Mammary epithelial cell (primary cell): ENCODE measurements at regions of chr10 and their contacts with region 1.

Region 1: GRCh38 chr10:112314822-112315474 is 31.7 kb downstream of the TECTB start:
- DNase-seq: peak; percentile 41
- H3K4me3 ChIP-seq: no peak overlapping the region
- H3K27ac ChIP-seq: no peak overlapping the region
- H3K4me1 ChIP-seq: no peaks in the 10 kb centered on the region
- H3K27me3 ChIP-seq: no peaks in the 10 kb centered on the region
- CTCF ChIP-seq: peak; percentile 83 to 86

Region 2: DNA sequence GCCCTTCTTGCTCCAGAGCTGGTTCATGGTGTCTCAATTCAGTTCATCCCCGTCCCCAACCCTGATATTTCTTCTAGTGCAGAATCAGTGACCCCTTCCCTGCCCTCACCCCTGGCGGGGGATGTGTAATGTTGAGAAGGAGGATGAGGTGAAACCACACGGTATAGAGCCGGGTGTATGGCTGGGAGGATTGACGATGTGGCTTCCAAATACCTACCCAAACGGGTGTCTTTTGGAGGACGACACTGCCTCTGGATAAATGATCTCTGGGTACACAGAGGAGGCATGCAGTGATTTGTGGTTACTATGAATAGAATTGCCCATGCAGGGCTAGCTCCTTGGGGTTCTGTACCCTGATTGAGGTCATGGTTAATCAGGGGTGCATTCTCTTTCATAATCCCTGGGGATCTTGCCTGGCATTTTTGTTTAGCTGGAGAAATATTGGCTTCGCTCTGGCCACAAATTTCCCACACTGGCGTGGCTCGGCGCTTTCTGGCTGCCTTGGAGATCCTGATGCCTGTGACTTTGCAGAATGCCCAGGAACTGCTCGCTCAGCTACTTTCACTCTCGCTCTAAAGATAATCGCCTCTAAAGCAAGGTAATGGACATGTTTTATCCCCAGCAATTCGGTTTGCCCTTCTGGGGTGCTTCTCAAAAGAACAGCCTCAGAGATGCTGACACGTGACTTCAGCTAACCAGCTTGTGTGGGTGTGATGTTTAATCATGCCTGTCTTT is 1581.6 kb before region 1 on chr10:
- CTCF ChIA-PET with region 1: no interaction called
- dilution Hi-C with region 1: no loop called
- in situ Hi-C with region 1: no loop called
- intact Hi-C with region 1: loop called (anchors 10 kb)
- DNase-seq: peak; percentile 16
- H3K4me3 ChIP-seq: peak overlapping the region; percentile 15 to 46 (median 42)
- H3K27ac ChIP-seq: no peak overlapping the region
- H3K4me1 ChIP-seq: peaks cover 3% of the 10 kb centered on the region
- H3K27me3 ChIP-seq: peaks cover 2% of the 10 kb centered on the region
- CTCF ChIP-seq: no peak

Region 3: DNA sequence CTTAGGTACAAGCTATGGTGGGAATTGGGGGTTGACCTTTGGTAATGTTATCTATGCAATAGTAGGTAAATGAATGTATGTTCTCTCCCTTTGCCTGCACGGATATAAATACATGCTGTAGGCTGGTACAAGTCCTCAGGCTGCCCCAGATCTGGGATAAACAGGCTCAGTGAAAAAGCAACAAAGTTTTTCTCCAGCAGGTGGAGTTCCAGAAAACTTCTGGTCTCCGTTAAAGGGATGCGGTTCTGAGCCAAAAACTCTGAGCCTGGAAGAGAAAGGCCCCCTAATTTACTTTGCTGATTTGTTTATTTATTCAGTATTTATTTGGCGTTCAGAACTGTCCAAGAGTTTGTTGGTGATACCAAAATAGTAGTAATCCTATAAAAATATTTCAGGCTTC is 1033.4 kb before region 1 on chr10:
- CTCF ChIA-PET with region 1: no interaction called
- dilution Hi-C with region 1: no loop called
- in situ Hi-C with region 1: no loop called
- intact Hi-C with region 1: loop called (anchors 5 kb)
- DNase-seq: peak; percentile 1
- H3K4me3 ChIP-seq: no peak overlapping the region
- H3K27ac ChIP-seq: no peak overlapping the region
- H3K4me1 ChIP-seq: no peaks in the 10 kb centered on the region
- H3K27me3 ChIP-seq: no peaks in the 10 kb centered on the region
- CTCF ChIP-seq: peak in 1 of 2 donors; percentile 25

Region 4: GRCh38 chr10:112115799-112116385 is 199.1 kb before region 1 on chr10:
- CTCF ChIA-PET with region 1: no interaction called
- dilution Hi-C with region 1: no loop called
- in situ Hi-C with region 1: no loop called
- intact Hi-C with region 1: loop called (anchors 1 kb)
- DNase-seq: peak; percentile 7
- H3K4me3 ChIP-seq: no peak overlapping the region
- H3K27ac ChIP-seq: no peak overlapping the region
- H3K4me1 ChIP-seq: no peaks in the 10 kb centered on the region
- H3K27me3 ChIP-seq: no peaks in the 10 kb centered on the region
- CTCF ChIP-seq: peak; percentile 88

Region 5: GRCh38 chr10:112434988-112435619 is 120.2 kb after region 1 on chr10:
- CTCF ChIA-PET with region 1: no interaction called
- dilution Hi-C with region 1: no loop called
- in situ Hi-C with region 1: no loop called
- intact Hi-C with region 1: loop called (anchors 1 kb)
- DNase-seq: peak; percentile 3
- H3K4me3 ChIP-seq: no peak overlapping the region
- H3K27ac ChIP-seq: no peak overlapping the region
- H3K4me1 ChIP-seq: no peaks in the 10 kb centered on the region
- H3K27me3 ChIP-seq: no peaks in the 10 kb centered on the region
- CTCF ChIP-seq: peak; percentile 2 to 39

Region 6: GRCh38 chr10:112461029-112461887 is 146.3 kb after region 1 on chr10:
- CTCF ChIA-PET with region 1: no interaction called
- dilution Hi-C with region 1: no loop called
- in situ Hi-C with region 1: no loop called
- intact Hi-C with region 1: no loop called
- DNase-seq: peak; percentile 87
- H3K4me3 ChIP-seq: no peak overlapping the region
- H3K27ac ChIP-seq: peak overlapping the region; percentile 73
- H3K4me1 ChIP-seq: peaks cover 7% of the 10 kb centered on the region
- H3K27me3 ChIP-seq: no peaks in the 10 kb centered on the region
- CTCF ChIP-seq: no peak